Dendritic cell treated with granulocyte-macrophage colony-stimulating factor and Interleukin-4, amounts not matched to agents 40 ng/mL and 50 ng/mL, for 4 days (primary cell): ENCODE measurements at regions of chr18 and their contacts with region 1.

Region 1: DNA sequence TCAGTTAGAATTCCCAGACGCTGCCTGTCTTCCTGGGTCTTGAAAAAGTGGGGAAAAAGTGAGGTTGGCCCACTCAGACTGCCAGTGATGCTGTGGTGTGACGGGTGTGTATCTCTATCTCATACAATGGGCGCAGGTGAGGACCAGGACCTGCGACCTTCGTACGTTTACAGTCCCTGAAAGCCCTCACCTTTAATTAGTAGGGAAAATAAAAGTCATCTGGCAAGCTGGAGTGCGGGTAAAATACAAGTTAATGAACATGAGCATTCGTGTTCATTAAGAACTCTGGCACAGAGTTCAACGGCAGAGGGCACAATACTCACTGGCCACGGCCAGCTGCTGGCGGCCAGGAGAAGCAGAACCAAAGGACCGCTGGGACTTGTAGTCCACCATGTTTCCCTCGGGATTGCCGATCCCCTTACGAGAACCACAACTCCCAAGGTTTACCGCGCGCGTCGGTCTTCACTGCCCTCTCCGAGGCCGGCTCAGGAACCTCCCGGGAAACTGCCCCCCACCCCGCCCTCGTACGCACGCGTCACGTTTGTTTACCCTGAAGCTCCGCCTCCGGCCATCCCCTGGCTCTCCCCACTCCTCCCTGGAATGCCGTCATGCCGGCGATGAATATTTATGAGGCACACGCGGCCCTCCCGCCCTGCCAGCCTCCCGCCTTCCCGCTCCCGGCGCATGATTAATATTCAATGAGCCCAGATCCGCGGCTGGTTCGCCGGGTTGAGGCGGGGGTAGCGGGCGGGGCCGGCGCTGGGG is 488 bp upstream of the PHLPP1 start:
- H3K4me3 Mint-ChIP-seq: peak overlapping the region; percentile 75
- H3K27ac Mint-ChIP-seq: peak overlapping the region; percentile 81
- H3K4me1 Mint-ChIP-seq: peaks cover 27% of the 10 kb centered on the region
- H3K27me3 Mint-ChIP-seq: peaks cover 1% of the 10 kb centered on the region

Region 2: GRCh38 chr18:62186774-62187542 is 527.9 kb before region 1 on chr18 and contains the starts of genes PIGN and RELCH:
- intact Hi-C with region 1: loop called (anchors 5 kb)
- H3K4me3 Mint-ChIP-seq: peak within 1 kb of the TSS; percentile 98
- H3K27ac Mint-ChIP-seq: peak within 1 kb of the TSS; percentile 98
- H3K4me1 Mint-ChIP-seq: peaks cover 43% of the 10 kb centered on the region
- H3K27me3 Mint-ChIP-seq: no peaks in the 10 kb centered on the region

Region 3: DNA sequence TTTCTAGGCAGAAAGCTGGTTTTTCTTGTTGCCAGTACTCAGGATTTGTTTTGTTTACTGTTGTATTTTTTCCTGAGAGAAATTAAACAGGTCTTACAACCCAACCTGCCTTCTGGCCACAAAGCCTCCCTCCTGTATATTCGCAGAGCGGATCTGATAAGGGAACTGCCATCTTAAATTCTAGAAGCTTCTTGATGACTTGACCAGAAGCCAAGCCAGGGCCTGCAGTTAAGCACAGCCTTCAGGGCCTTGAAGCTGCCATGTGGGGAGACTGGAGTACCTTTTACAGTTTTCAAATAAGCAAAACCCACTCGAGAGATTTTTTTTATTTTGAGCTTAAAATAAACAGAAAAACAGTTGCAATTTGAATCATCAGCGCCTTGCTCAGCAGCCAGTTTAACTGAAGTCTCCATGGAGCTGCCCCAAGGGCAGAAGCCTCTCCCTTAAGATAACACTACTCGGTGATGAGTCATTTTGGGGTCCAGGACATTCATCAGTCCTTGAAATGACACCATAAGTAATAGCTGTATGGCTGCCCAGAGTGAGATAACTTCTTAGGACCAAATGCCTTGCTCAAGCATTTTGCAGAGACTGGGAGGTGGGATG is 51.0 kb before region 1 on chr18:
- intact Hi-C with region 1: no loop called
- H3K4me3 Mint-ChIP-seq: no peak overlapping the region
- H3K27ac Mint-ChIP-seq: no peak overlapping the region
- H3K4me1 Mint-ChIP-seq: no peaks in the 10 kb centered on the region
- H3K27me3 Mint-ChIP-seq: no peaks in the 10 kb centered on the region

Region 4: GRCh38 chr18:62814132-62814759 is 99.4 kb after region 1 on chr18:
- intact Hi-C with region 1: loop called (anchors 1 kb)
- H3K4me3 Mint-ChIP-seq: no peak overlapping the region
- H3K27ac Mint-ChIP-seq: peak overlapping the region; percentile 87
- H3K4me1 Mint-ChIP-seq: peaks cover 28% of the 10 kb centered on the region
- H3K27me3 Mint-ChIP-seq: no peaks in the 10 kb centered on the region

Region 5: DNA sequence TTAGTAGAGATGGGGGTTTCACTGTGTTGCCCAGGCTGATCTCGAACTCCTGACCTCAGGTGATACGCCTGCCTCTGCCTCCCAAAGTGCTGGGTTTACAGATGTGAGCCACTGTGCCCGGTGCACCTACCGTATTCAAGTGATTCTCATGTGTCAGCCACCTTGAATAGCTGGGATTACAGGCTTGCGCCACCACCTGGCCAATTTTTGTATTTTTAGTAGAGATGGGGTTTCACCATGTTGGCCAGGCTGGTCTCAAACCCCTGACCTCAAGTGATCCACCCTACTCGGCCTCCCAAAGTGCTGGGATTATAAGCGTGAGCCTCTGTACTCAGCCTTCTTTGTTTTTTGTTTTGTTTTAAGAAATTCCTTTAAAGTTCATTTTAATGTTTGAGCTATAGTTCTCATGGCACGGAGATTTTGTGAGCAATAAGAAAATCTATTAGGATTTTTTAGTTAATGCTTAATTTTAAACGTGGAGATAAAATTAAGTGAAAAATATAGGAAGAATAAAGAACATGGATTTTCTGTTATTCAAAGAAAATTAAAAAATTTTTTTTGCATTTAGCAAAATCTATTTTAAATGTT is 243.1 kb after region 1 on chr18:
- intact Hi-C with region 1: loop called (anchors 1 kb)
- H3K4me3 Mint-ChIP-seq: no peak overlapping the region
- H3K27ac Mint-ChIP-seq: no peak overlapping the region
- H3K4me1 Mint-ChIP-seq: peaks cover 9% of the 10 kb centered on the region
- H3K27me3 Mint-ChIP-seq: no peaks in the 10 kb centered on the region

Region 6: GRCh38 chr18:63969960-63970802 is 1255.3 kb after region 1 on chr18 and contains the start of gene SERPINB8:
- intact Hi-C with region 1: loop called (anchors 10 kb)
- H3K4me3 Mint-ChIP-seq: peak within 1 kb of the TSS; percentile 97
- H3K27ac Mint-ChIP-seq: peak within 1 kb of the TSS; percentile 100
- H3K4me1 Mint-ChIP-seq: peaks cover 85% of the 10 kb centered on the region
- H3K27me3 Mint-ChIP-seq: no peaks in the 10 kb centered on the region